MCF 10A (cell line): ENCODE measurements at regions of chr5 and their contacts with region 1.

Region 1: DNA sequence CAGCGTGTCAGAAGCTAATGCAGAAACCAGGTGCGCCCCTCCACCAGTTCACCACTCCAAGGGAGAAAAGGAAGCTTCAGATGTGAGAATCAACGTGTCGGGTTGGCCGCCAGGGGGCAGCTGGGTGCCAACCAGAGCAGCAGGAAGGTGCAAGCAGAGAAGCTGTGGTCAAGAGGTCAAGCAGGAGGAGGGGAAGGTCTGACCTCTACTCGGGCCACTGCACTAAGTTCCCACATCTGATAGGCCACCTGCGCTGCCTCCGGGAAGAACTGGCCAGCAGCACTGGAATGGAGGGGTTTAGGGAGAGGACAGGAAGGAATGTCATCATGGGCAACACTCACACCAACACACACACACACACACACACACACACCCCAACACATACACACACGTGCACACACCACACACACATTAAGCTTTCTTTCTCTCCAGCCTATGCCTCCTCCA is 31.4 kb downstream of the ANXA6 start:
- DNase-seq: peak; percentile 76
- H3K4me3 Mint-ChIP-seq: no peak overlapping the region
- H3K27ac Mint-ChIP-seq: no peak overlapping the region
- H3K4me1 Mint-ChIP-seq: peaks cover 12% of the 10 kb centered on the region
- H3K27me3 Mint-ChIP-seq: peaks cover 21% of the 10 kb centered on the region
- CTCF ChIP-seq: peak; percentile 91

Region 2: GRCh38 chr5:151037561-151038411 is 88.4 kb before region 1 on chr5:
- CTCF ChIA-PET with region 1: interaction called, 32 read pairs
- POLR2A ChIA-PET with region 1: interaction called, 3 read pairs
- intact Hi-C with region 1: no loop called
- DNase-seq: no peak
- H3K4me3 Mint-ChIP-seq: no peak overlapping the region
- H3K27ac Mint-ChIP-seq: peak overlapping the region; percentile 75
- H3K4me1 Mint-ChIP-seq: peaks cover 7% of the 10 kb centered on the region
- H3K27me3 Mint-ChIP-seq: no peaks in the 10 kb centered on the region
- CTCF ChIP-seq: no peak

Region 3: GRCh38 chr5:151115274-151115905 is 10.8 kb before region 1 on chr5:
- CTCF ChIA-PET with region 1: interaction called, 126 read pairs
- POLR2A ChIA-PET with region 1: interaction called, 4 read pairs
- intact Hi-C with region 1: no loop called
- DNase-seq: peak; percentile 78
- H3K4me3 Mint-ChIP-seq: no peak overlapping the region
- H3K27ac Mint-ChIP-seq: no peak overlapping the region
- H3K4me1 Mint-ChIP-seq: no peaks in the 10 kb centered on the region
- H3K27me3 Mint-ChIP-seq: no peaks in the 10 kb centered on the region
- CTCF ChIP-seq: peak; percentile 99

Region 4: DNA sequence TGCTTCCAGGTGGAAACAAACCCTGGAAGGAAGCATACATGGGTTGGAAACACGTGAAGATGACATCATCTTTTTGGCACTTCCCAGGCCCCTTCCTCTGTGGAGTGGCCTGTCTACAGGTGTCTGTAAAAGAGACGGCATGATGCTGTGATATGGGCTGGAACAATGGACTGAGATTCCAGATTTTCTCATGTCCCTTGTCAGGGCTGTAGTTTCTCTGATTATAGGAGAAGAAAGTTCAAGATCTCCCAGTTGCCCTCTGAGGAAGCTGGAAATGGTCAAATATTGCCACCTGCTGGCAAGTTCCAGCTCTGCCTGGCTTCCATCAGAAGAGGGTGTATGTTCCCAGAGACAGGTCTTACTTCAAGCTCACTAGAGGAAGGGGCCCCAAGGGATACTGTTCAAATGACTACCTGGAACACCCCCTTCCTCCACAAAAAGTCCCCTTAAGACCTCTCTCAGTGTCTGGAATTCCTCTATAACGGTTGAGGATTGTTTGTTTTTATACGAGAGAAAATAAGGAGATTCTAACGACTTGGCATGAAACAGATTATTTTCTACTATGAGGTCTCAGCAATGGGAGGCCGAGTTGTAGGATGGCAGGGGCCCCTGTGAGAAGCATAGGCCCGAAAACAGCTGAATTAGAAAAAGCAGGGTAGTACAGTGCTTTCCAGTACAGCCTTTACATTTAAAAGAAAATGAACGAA is 38.6 kb after region 1 on chr5:
- CTCF ChIA-PET with region 1: interaction called, 745 read pairs
- POLR2A ChIA-PET with region 1: interaction called, 14 read pairs
- intact Hi-C with region 1: loop called (anchors 1 kb)
- DNase-seq: peak; percentile 91
- H3K4me3 Mint-ChIP-seq: no peak overlapping the region
- H3K27ac Mint-ChIP-seq: no peak overlapping the region
- H3K4me1 Mint-ChIP-seq: no peaks in the 10 kb centered on the region
- H3K27me3 Mint-ChIP-seq: peaks cover 15% of the 10 kb centered on the region
- CTCF ChIP-seq: peak; percentile 96

Region 5: DNA sequence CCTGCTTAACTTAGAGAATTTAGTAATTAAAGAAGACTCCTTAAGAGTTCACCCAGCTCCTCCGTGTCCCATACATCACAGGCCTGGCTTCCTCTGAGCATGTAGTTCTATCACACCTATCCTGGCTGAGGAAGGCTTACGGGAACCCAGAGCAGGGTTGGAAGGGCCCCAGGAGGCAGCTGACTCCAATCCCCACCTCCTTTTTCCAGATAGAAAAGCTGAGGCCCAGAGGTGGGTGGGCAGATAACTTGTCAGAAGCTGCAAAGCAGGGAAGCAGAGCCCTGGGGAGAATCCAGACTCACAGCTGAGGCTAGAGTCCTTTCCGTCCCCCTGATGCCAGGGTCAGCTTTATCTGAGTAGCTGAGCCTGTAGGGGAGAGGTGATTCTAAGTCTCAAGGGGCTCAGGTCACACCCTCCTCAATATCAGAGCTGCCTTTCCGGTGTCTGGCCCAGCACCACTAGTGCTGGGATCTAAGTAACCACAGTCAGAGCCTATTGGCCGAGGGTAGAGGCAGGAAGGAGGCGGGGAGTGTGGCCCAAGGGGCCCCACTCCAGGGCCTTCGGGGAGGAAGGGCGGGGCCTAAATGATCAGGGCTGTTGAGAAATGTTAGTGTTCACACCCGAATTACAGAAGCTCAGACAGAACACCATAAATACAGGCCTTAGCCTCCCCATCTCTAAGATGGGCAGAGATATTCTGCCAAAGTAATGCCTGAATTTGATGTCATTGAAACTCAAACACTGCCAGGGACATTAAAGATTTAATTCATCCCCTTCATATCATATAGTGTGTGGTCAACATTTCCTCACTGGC is 87.8 kb after region 1 on chr5:
- CTCF ChIA-PET with region 1: interaction called, 13 read pairs
- POLR2A ChIA-PET with region 1: no interaction called
- intact Hi-C with region 1: no loop called
- DNase-seq: peak; percentile 87
- H3K4me3 Mint-ChIP-seq: no peak overlapping the region
- H3K27ac Mint-ChIP-seq: peak overlapping the region; percentile 18
- H3K4me1 Mint-ChIP-seq: peaks cover 3% of the 10 kb centered on the region
- H3K27me3 Mint-ChIP-seq: no peaks in the 10 kb centered on the region
- CTCF ChIP-seq: no peak

Region 6: DNA sequence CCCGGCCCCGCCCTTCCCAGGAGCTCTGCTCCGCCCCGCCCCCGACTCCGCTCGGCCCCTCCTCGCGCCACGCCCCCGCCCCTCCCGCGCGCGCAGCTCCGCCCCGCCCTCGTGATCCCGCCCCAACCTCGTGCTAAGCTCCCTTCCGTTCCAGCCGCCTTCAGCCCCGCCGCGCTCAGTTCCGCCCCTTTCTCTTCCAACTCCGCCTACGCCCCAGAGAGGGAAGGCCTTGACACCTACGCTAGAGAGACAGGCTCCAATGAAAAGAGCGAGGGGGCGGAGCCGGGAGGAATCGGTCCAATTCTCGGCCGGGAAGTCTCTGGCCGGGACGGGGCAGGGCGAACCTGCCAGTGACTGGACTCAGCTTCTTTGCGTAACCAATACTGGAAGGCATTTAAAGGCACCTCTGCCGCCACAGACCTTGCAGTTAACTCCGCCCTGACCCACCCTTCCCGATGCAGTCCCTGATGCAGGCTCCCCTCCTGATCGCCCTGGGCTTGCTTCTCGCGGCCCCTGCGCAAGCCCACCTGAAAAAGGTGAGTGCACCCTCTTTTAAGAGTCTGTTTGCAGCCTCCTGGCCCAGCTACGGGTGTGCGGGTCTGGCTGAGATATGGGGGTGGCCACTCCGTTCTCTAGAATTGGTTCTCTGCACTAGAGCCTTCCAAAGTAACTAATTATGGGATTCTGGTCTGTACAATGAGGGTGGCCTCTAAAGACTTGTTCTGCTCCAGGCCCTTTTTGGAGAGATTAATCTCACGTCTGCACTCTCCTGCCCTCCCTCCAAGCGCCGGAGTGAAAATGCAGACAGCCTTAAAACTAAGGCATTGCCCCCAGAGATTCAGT is 126.8 kb after region 1 on chr5 and contains the start of gene GM2A:
- CTCF ChIA-PET with region 1: interaction called, 19 read pairs
- POLR2A ChIA-PET with region 1: interaction called, 5 read pairs
- intact Hi-C with region 1: no loop called
- DNase-seq: peak; percentile 100
- H3K4me3 Mint-ChIP-seq: peak within 1 kb of the TSS; percentile 79
- H3K27ac Mint-ChIP-seq: peak within 1 kb of the TSS; percentile 10
- H3K4me1 Mint-ChIP-seq: peaks cover 21% of the 10 kb centered on the region
- H3K27me3 Mint-ChIP-seq: no peaks in the 10 kb centered on the region
- CTCF ChIP-seq: no peak
- total RNA-seq, gene GM2A: 28.9 and 36.1 TPM in 2 replicates

Region 7: GRCh38 chr5:151659001-151659754 is 533.0 kb after region 1 on chr5:
- CTCF ChIA-PET with region 1: interaction called, 4 read pairs
- POLR2A ChIA-PET with region 1: no interaction called
- intact Hi-C with region 1: loop called (anchors 10 kb)
- DNase-seq: peak; percentile 87
- H3K4me3 Mint-ChIP-seq: no peak overlapping the region
- H3K27ac Mint-ChIP-seq: no peak overlapping the region
- H3K4me1 Mint-ChIP-seq: peaks cover 22% of the 10 kb centered on the region
- H3K27me3 Mint-ChIP-seq: no peaks in the 10 kb centered on the region
- CTCF ChIP-seq: peak; percentile 98